ENCODE measurements at regions of chr2 and their contacts with region 1.

Region 1: GRCh38 chr2:68857855-68858456 is 13.2 kb downstream of the BMP10 start:
- DNase-seq: no peak
- ATAC-seq: no peak
- H3K4me3 ChIP-seq: no peak overlapping the region
- H3K27ac ChIP-seq: no peak overlapping the region
- H3K4me1 ChIP-seq: no peaks in the 10 kb centered on the region
- H3K27me3 ChIP-seq: peaks cover 0 to 3% (median 0%) of the 10 kb centered on the region in 3 donors
- CTCF ChIP-seq: no peak

Region 2: DNA sequence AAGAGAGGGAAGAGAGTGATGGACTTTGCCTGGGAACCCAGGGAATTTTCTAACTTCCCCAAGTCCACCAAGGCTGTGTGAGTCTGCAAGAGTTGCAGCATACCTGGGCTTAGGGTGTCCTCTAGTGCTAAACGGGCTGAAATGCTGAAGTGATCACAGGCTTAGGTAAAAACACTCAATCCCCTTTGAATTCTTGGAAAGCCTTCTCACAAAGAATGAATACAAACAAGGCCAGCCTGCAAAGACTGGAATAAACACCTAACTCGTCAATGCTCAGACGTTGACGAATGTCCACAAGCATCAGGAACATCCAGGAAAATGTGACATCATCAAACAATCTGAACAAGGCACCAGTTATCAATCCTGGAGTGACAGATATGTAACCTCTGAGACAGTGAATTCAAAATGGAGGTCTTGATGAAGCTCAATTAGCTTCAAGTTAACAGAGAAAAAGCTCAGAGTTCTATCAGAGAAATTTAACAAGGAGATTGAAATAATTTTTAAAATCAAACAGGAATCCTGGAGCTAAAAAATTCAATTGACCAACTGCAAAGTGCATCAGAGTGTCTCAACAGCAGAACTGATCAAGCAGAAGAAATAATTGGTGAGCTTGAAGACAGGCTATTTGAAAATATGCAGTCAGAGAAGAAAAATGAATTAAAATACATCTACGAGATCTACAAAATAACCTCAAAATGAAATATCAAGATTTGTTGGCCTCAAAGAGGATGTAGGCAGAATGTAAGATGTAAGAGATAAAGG is 43.4 kb after region 1 on chr2:
- intact Hi-C with region 1: loop called in 1 of 2 experiments (anchors 1 kb)
- DNase-seq: no peak
- ATAC-seq: no peak
- H3K4me3 ChIP-seq: no peak overlapping the region
- H3K27ac ChIP-seq: no peak overlapping the region
- H3K4me1 ChIP-seq: no peaks in the 10 kb centered on the region
- H3K27me3 ChIP-seq: no peaks in the 10 kb centered on the region
- CTCF ChIP-seq: no peak

Measured in psoas muscle (tissue), 8 donors.